ENCODE measurements at regions of chr21 and their contacts with region 1.

Region 1: DNA sequence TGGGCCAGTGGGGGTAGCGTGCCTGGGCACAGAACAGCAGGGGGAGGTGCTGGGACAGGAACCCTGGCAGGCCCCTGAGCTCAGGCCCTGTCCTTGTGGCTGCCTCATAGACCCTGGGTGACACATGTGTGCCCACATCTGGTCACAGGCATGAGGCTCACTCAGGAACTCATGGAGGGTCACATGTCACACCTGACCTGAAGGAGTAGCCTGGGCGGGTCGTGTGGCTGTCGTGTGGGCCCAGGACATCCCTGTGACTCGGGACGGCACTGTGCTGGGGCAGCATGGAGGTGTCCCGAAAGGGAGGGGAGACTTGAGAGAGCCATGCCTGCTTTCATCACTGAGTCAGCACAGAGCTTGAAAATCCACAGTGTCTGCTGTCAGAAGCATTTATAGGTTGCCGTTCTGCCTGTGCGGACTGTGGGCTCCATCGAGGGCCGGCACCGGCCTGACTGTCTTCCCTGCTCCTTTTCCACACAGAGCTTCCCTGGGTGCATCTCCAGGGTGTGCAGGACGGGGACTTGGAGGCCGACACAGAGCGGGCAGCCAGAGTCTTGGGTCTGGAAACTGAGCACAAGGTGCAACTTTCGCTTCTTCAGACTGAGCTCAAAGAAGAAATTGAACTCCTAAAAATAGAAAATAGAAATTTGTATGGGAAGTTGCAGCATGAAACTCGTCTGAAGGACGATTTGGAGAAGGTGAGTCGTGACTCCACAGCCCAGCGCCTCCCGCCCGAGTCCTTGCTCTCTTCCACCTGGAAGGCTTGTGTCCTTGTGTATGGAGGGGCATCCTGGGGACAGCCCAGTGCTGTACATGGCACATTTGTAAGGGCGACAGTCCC is 32.8 kb downstream of the PCNT start:
- DNase-seq: no peak
- ATAC-seq: no peak
- H3K4me3 ChIP-seq: no peak overlapping the region
- H3K27ac ChIP-seq: no peak overlapping the region
- H3K4me1 ChIP-seq: no peaks in the 10 kb centered on the region
- H3K27me3 ChIP-seq: no peaks in the 10 kb centered on the region
- CTCF ChIP-seq: no peak

Region 2: DNA sequence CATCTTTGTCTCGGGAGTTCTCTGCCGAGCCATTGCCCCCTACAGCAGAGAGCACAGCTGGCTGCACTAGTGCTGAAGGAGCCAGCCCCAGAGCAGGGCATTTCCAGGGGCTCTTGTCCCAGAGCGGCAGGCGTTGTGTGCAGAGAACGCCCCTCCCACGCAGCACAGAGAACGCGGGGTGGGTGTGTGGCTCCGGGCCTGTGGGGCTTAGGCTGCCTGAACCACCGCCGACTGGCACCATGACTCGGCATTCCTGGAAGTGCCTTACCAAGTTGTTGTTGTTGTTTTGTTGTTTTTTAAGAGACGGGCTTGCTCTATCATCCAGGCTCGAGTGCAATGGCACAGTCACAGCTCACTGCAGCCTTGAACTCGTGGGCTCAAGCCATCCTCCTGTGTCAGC is 86.2 kb after region 1 on chr21:
- CTCF ChIA-PET with region 1: no interaction called
- POLR2A ChIA-PET with region 1: interaction called, 11 read pairs
- in situ Hi-C with region 1: no loop called
- intact Hi-C with region 1: no loop called
- DNase-seq: no peak
- ATAC-seq: no peak
- H3K4me3 ChIP-seq: no peak overlapping the region
- H3K27ac ChIP-seq: no peak overlapping the region
- H3K4me1 ChIP-seq: no peaks in the 10 kb centered on the region
- H3K27me3 ChIP-seq: no peaks in the 10 kb centered on the region
- CTCF ChIP-seq: no peak

Measured in Panc1 (cell line).